Natural killer cell (primary cell): ENCODE measurements at regions of chr13 and their contacts with region 1.

Region 1: GRCh38 chr13:20703780-20704445 is 414 bp downstream of the IL17D start:
- DNase-seq: peak; percentile 71 to 87
- ATAC-seq: peak; percentile 89 to 92 (median 92)
- H3K4me3 ChIP-seq: no peak overlapping the region
- H3K4me3 Mint-ChIP-seq: peak overlapping the region; percentile 74
- H3K27ac ChIP-seq: no peak overlapping the region
- H3K27ac Mint-ChIP-seq: peak overlapping the region in 1 of 2 donors; percentile 75
- H3K4me1 ChIP-seq: peaks cover 14% of the 10 kb centered on the region
- H3K4me1 Mint-ChIP-seq: peaks cover 11 to 17% of the 10 kb centered on the region in 2 donors
- H3K27me3 ChIP-seq: peaks cover 3% of the 10 kb centered on the region
- H3K27me3 Mint-ChIP-seq: peaks cover 18 to 25% of the 10 kb centered on the region in 2 donors
- CTCF ChIP-seq: peak; percentile 31

Region 2: DNA sequence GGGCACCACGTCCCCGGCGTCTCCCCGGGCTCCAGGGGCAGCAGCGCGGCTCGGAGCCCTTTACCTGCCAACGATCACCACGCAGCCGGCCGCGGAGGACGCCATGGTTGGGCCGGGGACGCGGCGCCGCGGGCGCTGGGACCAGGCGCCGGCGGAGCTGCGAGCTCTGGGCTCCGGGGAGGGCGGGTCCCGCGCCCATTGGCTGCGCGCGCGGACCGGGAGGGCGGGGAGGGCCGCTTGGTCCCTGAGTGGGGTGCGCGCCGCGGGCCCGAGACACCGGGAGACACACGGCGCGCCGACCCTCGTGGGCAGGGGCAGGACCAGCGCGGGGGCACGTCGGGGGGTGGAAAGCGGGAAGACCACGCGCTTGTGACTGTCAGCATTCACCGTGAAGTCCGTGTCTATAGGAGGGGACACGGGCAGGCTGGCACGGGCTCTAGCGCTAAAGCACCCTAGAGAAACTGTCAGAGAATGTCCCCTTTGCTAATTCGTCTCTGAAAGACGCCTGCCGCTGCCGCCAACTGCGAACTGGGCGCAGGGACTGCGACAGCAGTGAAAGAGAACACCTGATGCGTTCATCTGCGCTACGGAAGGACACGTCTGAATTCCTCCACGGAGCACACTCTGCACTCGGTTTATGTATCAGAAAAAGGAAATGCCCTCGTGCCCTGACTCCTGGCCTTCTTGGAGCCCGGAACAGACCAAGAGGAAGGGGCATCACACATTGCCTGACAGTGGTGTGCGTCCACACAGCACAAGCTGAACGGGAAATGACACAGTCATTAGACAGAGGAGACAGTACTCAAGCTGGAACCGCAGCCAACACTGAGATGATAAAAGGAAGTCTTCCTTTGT is 178.0 kb before region 1 on chr13 and contains the start of gene CRYL1:
- intact Hi-C with region 1: loop called (anchors 10 kb)
- DNase-seq: peak; percentile 64 to 84
- ATAC-seq: peak; percentile 87 to 91 (median 91)
- H3K4me3 ChIP-seq: peak within 1 kb of the TSS; percentile 71
- H3K4me3 Mint-ChIP-seq: peak within 1 kb of the TSS; percentile 88
- H3K27ac ChIP-seq: peak within 1 kb of the TSS; percentile 73
- H3K27ac Mint-ChIP-seq: peak within 1 kb of the TSS; percentile 75 to 77
- H3K4me1 ChIP-seq: peaks cover 19% of the 10 kb centered on the region
- H3K4me1 Mint-ChIP-seq: peaks cover 16 to 18% of the 10 kb centered on the region in 2 donors
- H3K27me3 ChIP-seq: no peaks in the 10 kb centered on the region
- H3K27me3 Mint-ChIP-seq: peaks cover 4 to 10% of the 10 kb centered on the region in 2 donors
- CTCF ChIP-seq: no peak
- total RNA-seq, gene CRYL1: 13.4 to 15.8 (median 14.9) TPM

Region 3: GRCh38 chr13:20667857-20668437 is 36.0 kb before region 1 on chr13:
- intact Hi-C with region 1: loop called (anchors 2 kb)
- DNase-seq: peak in 1 of 2 donors; percentile 5
- ATAC-seq: peak in 2 of 3 donors; percentile 50 to 65
- H3K4me3 ChIP-seq: no peak overlapping the region
- H3K4me3 Mint-ChIP-seq: no peak overlapping the region
- H3K27ac ChIP-seq: peak overlapping the region; percentile 55
- H3K27ac Mint-ChIP-seq: no peak overlapping the region
- H3K4me1 ChIP-seq: peaks cover 26% of the 10 kb centered on the region
- H3K4me1 Mint-ChIP-seq: peaks cover 5 to 15% of the 10 kb centered on the region in 2 donors
- H3K27me3 ChIP-seq: no peaks in the 10 kb centered on the region
- H3K27me3 Mint-ChIP-seq: no peaks in the 10 kb centered on the region
- CTCF ChIP-seq: no peak

Region 4: DNA sequence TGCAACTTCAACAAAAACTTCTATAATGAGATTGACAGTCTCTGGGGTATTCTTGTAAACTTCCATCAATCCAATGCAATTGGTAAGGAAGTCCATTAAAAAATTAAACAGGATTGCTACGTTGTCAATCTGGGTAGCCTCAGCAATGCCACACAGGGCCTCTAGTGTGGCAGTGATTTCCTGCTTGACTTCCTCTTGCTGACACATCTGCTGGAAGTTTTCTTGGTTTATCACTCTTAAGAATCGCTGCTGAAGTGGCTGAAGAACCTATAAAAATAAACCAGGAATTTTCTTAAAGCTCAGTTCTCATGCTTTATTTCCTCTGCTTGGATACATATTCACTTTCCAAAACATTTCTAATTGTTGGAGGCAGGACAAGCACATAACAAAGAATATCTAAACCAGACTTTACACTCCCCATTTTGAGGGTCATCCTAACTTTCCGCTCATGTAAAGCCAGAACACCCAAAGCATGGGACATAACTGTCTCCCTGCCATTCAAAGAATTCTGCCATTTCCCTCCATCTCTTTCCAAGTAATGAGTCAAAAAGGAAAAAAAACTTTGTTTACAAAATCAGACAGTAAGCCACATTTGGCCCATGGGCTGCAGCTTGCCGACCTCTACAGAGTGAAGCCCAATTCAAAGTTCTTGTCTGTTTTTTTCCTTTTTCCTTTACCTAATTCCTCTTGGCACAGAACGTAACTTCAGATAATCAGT is 93.0 kb after region 1 on chr13:
- intact Hi-C with region 1: no loop called
- DNase-seq: no peak
- ATAC-seq: no peak
- H3K4me3 ChIP-seq: no peak overlapping the region
- H3K4me3 Mint-ChIP-seq: no peak overlapping the region
- H3K27ac ChIP-seq: no peak overlapping the region
- H3K27ac Mint-ChIP-seq: peak overlapping the region in 1 of 2 donors; percentile 17
- H3K4me1 ChIP-seq: no peaks in the 10 kb centered on the region
- H3K4me1 Mint-ChIP-seq: peaks cover 8 to 9% of the 10 kb centered on the region in 2 donors
- H3K27me3 ChIP-seq: no peaks in the 10 kb centered on the region
- H3K27me3 Mint-ChIP-seq: no peaks in the 10 kb centered on the region
- CTCF ChIP-seq: no peak